ENCODE measurements at regions of chr7 and their contacts with region 1.

Region 1: DNA sequence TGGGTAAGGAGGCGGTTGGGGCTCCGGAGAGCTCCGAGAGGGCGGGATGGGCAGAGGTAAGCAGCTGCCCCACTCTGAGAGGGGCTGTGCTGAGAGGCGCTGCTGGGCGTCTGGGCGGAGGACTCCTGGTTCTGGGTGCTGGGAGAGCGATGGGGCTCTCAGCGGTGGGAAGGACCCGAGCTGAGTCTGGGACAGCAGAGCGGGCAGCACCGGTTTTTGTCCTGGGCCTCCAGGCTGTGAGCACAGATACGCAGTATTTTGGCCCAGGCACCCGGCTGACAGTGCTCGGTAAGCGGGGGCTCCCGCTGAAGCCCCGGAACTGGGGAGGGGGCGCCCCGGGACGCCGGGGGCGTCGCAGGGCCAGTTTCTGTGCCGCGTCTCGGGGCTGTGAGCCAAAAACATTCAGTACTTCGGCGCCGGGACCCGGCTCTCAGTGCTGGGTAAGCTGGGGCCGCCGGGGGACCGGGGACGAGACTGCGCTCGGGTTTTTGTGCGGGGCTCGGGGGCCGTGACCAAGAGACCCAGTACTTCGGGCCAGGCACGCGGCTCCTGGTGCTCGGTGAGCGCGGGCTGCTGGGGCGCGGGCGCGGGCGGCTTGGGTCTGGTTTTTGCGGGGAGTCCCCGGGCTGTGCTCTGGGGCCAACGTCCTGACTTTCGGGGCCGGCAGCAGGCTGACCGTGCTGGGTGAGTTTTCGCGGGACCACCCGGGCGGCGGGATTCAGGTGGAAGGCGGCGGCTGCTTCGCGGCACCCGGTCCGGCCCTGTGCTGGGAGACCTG is 26.0 kb downstream of the PRSS2 start:
- DNase-seq: peak in 6 of 14 experiments; percentile 15 to 68 (median 54)
- ATAC-seq: peak; percentile 5
- H3K4me3 ChIP-seq: peak overlapping the region; percentile 100
- H3K4me3 Mint-ChIP-seq: peak overlapping the region; percentile 97
- H3K27ac ChIP-seq: peak overlapping the region; percentile 95 to 99
- H3K27ac Mint-ChIP-seq: peak overlapping the region; percentile 98
- H3K4me1 ChIP-seq: peaks cover 67% of the 10 kb centered on the region
- H3K4me1 Mint-ChIP-seq: peaks cover 77% of the 10 kb centered on the region
- H3K27me3 ChIP-seq: no peaks in the 10 kb centered on the region
- H3K27me3 Mint-ChIP-seq: no peaks in the 10 kb centered on the region
- CTCF ChIP-seq: no peak

Region 2: GRCh38 chr7:142313528-142313927 is 483.3 kb before region 1 on chr7:
- CTCF ChIA-PET with region 1: no interaction called
- POLR2A ChIA-PET with region 1: interaction called, 20 read pairs
- intact Hi-C with region 1: no loop called
- DNase-seq: peak in 9 of 14 experiments; percentile 35 to 64 (median 52)
- ATAC-seq: peak; percentile 91
- H3K4me3 ChIP-seq: peak overlapping the region; percentile 2
- H3K4me3 Mint-ChIP-seq: peak overlapping the region; percentile 65
- H3K27ac ChIP-seq: no peak overlapping the region
- H3K27ac Mint-ChIP-seq: peak overlapping the region; percentile 58
- H3K4me1 ChIP-seq: peaks cover 15% of the 10 kb centered on the region
- H3K4me1 Mint-ChIP-seq: peaks cover 18% of the 10 kb centered on the region
- H3K27me3 ChIP-seq: peaks cover 0 to 7% of the 10 kb centered on the region in 2 experiments
- H3K27me3 Mint-ChIP-seq: peaks cover 4% of the 10 kb centered on the region
- CTCF ChIP-seq: no peak

Region 3: DNA sequence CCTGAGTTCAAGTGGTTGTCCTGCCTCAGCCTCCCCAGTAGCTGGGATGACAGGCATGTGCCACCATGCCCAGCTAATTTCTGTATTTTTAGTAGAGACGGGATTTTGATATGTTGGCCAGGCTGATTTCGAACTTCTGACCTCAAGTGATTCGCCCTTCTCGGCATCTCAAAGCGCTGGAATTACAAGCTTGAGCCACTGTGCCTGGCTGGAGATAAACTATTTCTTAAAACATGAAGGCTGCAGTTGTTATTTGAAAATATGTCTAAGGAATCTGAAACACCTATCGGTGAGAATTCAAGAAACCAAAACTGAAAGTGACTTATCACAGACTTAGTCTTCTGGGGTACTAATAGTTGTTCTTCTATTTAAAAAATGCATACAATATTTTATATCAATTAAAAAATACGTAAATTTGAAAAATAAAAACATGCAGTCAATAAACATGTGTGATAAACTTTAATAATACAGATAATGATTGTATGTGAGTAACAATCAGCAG is 362.1 kb before region 1 on chr7:
- CTCF ChIA-PET with region 1: no interaction called
- POLR2A ChIA-PET with region 1: interaction called, 23 read pairs
- intact Hi-C with region 1: no loop called
- DNase-seq: no peak
- ATAC-seq: no peak
- H3K4me3 ChIP-seq: peak overlapping the region; percentile 41
- H3K4me3 Mint-ChIP-seq: peak overlapping the region; percentile 74
- H3K27ac ChIP-seq: no peak overlapping the region
- H3K27ac Mint-ChIP-seq: peak overlapping the region; percentile 57
- H3K4me1 ChIP-seq: peaks cover 22% of the 10 kb centered on the region
- H3K4me1 Mint-ChIP-seq: peaks cover 41% of the 10 kb centered on the region
- H3K27me3 ChIP-seq: no peaks in the 10 kb centered on the region
- H3K27me3 Mint-ChIP-seq: no peaks in the 10 kb centered on the region
- CTCF ChIP-seq: no peak

Region 4: DNA sequence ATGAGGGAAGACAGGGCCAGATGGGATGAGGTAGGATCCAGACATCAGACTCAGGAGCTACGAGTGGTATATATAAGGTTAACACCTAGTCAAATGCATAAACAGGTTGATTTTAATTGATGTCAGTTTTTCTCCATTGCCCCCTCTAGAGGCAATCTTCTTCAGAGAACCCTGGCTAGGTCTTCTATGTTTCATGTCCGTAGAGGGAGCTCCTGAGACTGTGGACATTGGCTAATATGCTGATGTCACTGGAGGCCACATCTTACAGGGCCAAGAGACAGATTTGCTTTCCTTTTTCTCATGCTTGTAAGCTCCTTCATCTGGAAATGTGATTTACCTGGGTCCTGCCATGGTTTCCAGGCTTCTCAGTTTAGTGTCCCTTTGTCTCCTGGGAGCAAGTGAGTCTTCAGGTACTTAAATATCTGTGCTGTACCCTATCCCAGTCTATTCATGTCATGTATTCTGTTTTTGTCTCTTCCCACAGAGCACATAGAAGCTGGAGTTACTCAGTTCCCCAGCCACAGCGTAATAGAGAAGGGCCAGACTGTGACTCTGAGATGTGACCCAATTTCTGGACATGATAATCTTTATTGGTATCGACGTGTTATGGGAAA is 209.1 kb before region 1 on chr7:
- CTCF ChIA-PET with region 1: no interaction called
- POLR2A ChIA-PET with region 1: interaction called, 11 read pairs
- intact Hi-C with region 1: no loop called
- DNase-seq: peak in 3 of 14 experiments; percentile 53 to 74 (median 68)
- ATAC-seq: peak; percentile 89
- H3K4me3 ChIP-seq: peak overlapping the region; percentile 15
- H3K4me3 Mint-ChIP-seq: peak overlapping the region; percentile 48
- H3K27ac ChIP-seq: no peak overlapping the region
- H3K27ac Mint-ChIP-seq: peak overlapping the region; percentile 67
- H3K4me1 ChIP-seq: peaks cover 2% of the 10 kb centered on the region
- H3K4me1 Mint-ChIP-seq: peaks cover 8% of the 10 kb centered on the region
- H3K27me3 ChIP-seq: no peaks in the 10 kb centered on the region
- H3K27me3 Mint-ChIP-seq: no peaks in the 10 kb centered on the region
- CTCF ChIP-seq: peak; percentile 57

Region 5: GRCh38 chr7:142626420-142627035 is 170.3 kb before region 1 on chr7:
- CTCF ChIA-PET with region 1: no interaction called
- POLR2A ChIA-PET with region 1: interaction called, 25 read pairs
- intact Hi-C with region 1: no loop called
- DNase-seq: peak; percentile 54 to 82 (median 64)
- ATAC-seq: peak; percentile 94
- H3K4me3 ChIP-seq: peak overlapping the region; percentile 47
- H3K4me3 Mint-ChIP-seq: peak overlapping the region; percentile 89
- H3K27ac ChIP-seq: peak overlapping the region in 1 of 2 donors; percentile 7
- H3K27ac Mint-ChIP-seq: peak overlapping the region; percentile 90
- H3K4me1 ChIP-seq: no peaks in the 10 kb centered on the region
- H3K4me1 Mint-ChIP-seq: peaks cover 8% of the 10 kb centered on the region
- H3K27me3 ChIP-seq: no peaks in the 10 kb centered on the region
- H3K27me3 Mint-ChIP-seq: peaks cover 3% of the 10 kb centered on the region
- CTCF ChIP-seq: peak; percentile 54

Region 6: DNA sequence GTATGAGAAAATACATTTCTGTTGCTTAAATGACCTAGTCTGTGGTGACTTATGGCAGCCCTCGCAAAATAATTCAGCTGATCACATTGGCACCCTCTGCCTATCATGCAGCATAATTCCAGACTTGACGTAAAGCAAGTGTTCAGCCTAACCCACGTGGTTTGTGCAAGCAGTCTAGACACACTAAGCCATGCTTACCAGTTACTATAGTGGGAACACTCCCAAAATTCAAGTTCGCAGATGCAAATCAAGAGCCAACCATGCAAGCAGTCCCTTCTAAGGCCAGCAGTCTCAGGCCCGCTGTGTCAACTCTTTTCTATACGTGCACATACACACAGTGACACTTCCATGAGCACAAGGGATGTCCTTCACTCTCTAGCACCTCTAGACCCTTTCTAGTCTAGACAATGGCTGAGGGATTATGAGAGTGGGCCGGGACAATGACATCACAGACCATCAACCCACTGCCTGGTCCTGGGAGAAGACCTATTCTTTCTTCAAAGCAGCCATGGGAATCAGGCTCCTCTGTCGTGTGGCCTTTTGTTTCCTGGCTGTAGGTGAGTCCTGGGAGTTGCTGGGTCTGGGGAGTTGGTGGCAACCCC is 76.5 kb before region 1 on chr7:
- CTCF ChIA-PET with region 1: no interaction called
- POLR2A ChIA-PET with region 1: interaction called, 54 read pairs
- intact Hi-C with region 1: no loop called
- DNase-seq: peak in 3 of 14 experiments; percentile 6 to 58 (median 40)
- ATAC-seq: peak; percentile 67
- H3K4me3 ChIP-seq: peak overlapping the region; percentile 54
- H3K4me3 Mint-ChIP-seq: peak overlapping the region; percentile 82
- H3K27ac ChIP-seq: peak overlapping the region in 1 of 2 donors; percentile 34
- H3K27ac Mint-ChIP-seq: peak overlapping the region; percentile 74
- H3K4me1 ChIP-seq: peaks cover 35% of the 10 kb centered on the region
- H3K4me1 Mint-ChIP-seq: peaks cover 47% of the 10 kb centered on the region
- H3K27me3 ChIP-seq: no peaks in the 10 kb centered on the region
- H3K27me3 Mint-ChIP-seq: no peaks in the 10 kb centered on the region
- CTCF ChIP-seq: no peak

Region 7: GRCh38 chr7:142853739-142854371 is 57.1 kb after region 1 on chr7:
- CTCF ChIA-PET with region 1: no interaction called
- POLR2A ChIA-PET with region 1: interaction called, 40 read pairs
- intact Hi-C with region 1: no loop called
- DNase-seq: peak; percentile 44 to 83 (median 60)
- ATAC-seq: peak; percentile 82
- H3K4me3 ChIP-seq: peak overlapping the region; percentile 87
- H3K4me3 Mint-ChIP-seq: peak overlapping the region; percentile 95
- H3K27ac ChIP-seq: peak overlapping the region; percentile 24 to 41
- H3K27ac Mint-ChIP-seq: peak overlapping the region; percentile 85
- H3K4me1 ChIP-seq: peaks cover 30% of the 10 kb centered on the region
- H3K4me1 Mint-ChIP-seq: peaks cover 52% of the 10 kb centered on the region
- H3K27me3 ChIP-seq: no peaks in the 10 kb centered on the region
- H3K27me3 Mint-ChIP-seq: no peaks in the 10 kb centered on the region
- CTCF ChIP-seq: peak; percentile 90

Measured in CD4-positive, alpha-beta T cell (primary cell).